IMR-90 (cell line): ENCODE measurements at regions of chr1 and their contacts with region 1.

Region 1: GRCh38 chr1:15033264-15033663 is 120.3 kb upstream of the TMEM51 start:
- DNase-seq: peak; percentile 87
- ATAC-seq: peak; percentile 42
- H3K4me3 ChIP-seq: no peak overlapping the region
- H3K27ac ChIP-seq: no peak overlapping the region
- H3K4me1 ChIP-seq: peaks cover 13% of the 10 kb centered on the region
- H3K27me3 ChIP-seq: no peaks in the 10 kb centered on the region
- CTCF ChIP-seq: peak; percentile 58
- POLR2A ChIP-seq: no peak
- RAD21 ChIP-seq: no peak; the same call in 1 of the 2 replicates

Region 2: GRCh38 chr1:14980621-14981218 is 52.5 kb before region 1 on chr1:
- CTCF ChIA-PET with region 1: interaction called, 5 read pairs
- POLR2A ChIA-PET with region 1: no interaction called
- dilution Hi-C with region 1: no loop called
- in situ Hi-C with region 1: loop called (anchors 5 kb)
- intact Hi-C with region 1: no loop called
- DNase-seq: peak; percentile 56
- ATAC-seq: peak; percentile 68
- H3K4me3 ChIP-seq: no peak overlapping the region
- H3K27ac ChIP-seq: peak overlapping the region; percentile 12; the same call in 1 of the 2 replicates
- H3K4me1 ChIP-seq: peaks cover 11% of the 10 kb centered on the region
- H3K27me3 ChIP-seq: no peaks in the 10 kb centered on the region
- CTCF ChIP-seq: no peak
- POLR2A ChIP-seq: no peak
- RAD21 ChIP-seq: no peak

Region 3: GRCh38 chr1:14996133-14997050 is 36.9 kb before region 1 on chr1:
- CTCF ChIA-PET with region 1: no interaction called
- POLR2A ChIA-PET with region 1: no interaction called
- dilution Hi-C with region 1: no loop called
- in situ Hi-C with region 1: no loop called
- intact Hi-C with region 1: no loop called
- DNase-seq: peak; percentile 84
- ATAC-seq: peak; percentile 85
- H3K4me3 ChIP-seq: no peak overlapping the region
- H3K27ac ChIP-seq: peak overlapping the region; percentile 69
- H3K4me1 ChIP-seq: peaks cover 23% of the 10 kb centered on the region
- H3K27me3 ChIP-seq: no peaks in the 10 kb centered on the region
- CTCF ChIP-seq: no peak
- POLR2A ChIP-seq: no peak
- RAD21 ChIP-seq: no peak